Right ventricle myocardium inferior (tissue), 1 donor: ENCODE measurements at regions of chr20 and their contacts with region 1.

Region 1: DNA sequence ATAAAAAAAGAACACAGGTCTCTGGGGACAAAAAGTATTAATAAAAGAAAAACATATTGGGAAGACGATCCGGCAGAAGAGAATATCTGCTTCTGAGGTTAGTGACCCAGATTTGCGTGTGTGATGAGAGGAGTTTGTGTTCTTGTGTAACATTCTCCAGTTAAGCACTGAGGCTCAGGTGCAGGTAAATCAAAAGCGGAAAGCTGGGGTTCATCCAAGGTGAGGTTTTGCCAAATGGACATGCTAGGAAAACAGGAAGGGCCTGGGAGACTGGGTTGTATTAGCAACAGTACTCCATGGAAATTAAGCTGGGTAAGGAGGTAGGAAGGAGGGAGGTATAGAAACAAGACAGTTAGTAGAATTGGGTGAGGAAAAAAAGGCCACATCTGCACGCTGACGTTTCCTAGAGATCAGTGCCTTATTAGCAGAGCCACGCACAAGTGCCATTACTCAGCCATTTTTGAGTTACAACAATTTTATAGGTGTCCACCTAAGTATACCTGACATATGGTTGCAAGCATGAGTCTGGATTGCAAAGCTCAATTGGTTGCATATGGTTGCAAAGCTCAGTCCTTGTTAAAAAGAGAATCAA is 139.6 kb downstream of the ZMYND8 start:
- DNase-seq: no peak
- ATAC-seq: no peak

Region 2: DNA sequence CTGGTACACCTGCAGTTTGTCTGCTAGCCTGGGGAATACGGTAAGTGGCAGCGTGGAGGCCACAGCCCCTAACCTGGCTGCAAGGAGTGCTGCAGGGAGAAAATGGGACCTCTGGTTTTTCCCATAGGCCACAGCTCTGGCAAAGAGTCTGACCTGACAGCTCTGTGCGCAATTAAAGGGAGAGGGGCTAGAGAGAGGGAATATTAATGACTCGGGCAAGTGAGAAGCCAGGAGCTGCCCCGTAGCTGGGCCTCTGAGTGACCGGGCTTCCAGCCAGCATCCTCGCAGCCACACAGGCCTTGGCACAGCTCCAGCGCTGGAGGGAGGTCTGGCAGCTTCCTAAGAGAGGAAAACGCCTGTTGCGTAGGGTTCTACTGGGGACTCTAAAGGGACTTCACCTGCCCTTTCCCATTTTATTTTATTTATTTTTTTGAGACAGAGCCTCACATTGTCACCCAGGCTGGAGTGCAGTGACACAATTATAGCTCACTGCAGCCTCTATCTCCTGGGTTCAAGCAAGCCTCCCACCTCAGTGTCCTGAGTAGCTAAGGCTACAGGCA is 648.3 kb before region 1 on chr20:
- intact Hi-C with region 1: no loop called
- DNase-seq: peak; percentile 88
- ATAC-seq: peak; percentile 86

Region 3: DNA sequence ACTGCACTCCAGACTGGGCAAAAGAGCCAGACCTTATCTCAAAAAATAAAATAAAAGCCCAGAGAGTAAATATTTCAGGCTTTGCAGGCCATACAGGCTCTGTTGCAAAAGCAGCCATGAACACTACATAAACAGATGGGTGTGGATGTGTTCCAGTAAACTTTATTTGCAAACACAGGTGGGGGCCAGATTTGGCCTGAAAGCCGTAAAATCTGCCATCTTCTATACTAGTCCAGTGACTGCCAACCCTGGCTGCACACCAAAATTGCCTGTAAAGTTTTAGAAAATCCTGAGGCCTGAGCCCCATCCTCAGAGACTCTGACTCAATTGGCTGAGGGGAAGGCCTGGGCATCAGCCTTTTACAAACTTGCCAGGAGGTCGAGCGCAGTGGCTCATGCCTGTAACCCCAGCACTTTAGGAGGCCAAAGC is 36.0 kb after region 1 on chr20:
- intact Hi-C with region 1: loop called (anchors 5 kb)
- DNase-seq: no peak
- ATAC-seq: no peak

Region 4: DNA sequence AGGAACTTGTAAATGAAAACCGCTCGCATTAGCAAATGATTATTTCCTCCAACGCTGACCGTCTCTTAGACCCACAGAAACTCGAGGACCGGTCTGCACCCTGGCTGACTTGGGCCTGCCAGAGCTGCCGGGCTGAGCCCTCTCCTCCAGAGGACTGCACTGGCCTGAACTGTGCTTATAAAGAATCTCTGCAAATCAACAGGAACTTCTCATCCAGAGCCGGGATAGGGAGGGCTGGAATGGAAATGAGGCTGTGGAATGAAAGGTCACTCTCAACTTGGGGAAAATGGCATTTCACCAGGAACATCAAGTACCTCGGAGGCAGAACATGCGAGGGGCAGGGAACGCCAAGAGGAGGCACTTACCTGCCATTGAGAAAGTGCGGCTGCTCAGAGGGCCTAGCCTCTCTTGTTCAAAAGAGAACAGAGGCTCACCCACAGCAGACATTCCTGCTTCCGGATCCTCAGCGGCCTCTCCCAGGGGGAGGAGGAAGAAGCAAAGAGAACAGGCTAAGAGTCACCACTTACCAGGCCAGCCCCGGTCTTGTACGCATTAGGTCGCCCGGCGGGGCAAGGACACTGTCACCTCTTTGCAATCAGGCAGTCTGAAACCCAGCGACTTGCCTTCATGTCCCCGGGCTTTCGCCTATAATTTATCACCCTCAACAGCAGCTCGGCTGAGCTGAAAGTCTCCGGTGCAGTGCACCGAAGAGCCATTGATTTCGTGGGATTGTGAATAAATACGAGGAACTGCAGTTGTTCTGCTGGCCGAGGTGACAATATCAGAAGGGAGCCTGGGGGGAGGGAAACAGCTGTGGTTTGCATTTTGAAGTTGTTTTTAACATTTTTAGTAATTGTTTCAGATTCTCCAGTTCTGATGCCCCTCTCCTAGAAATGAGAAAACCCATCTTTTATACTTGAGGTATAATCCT is 101.9 kb after region 1 on chr20:
- intact Hi-C with region 1: no loop called
- DNase-seq: peak; percentile 87
- ATAC-seq: peak; percentile 81